Psoas muscle (tissue), 8 donors: ENCODE measurements at regions of chr11 and their contacts with region 1.

Region 1: GRCh38 chr11:14308114-14308896 is 50.7 kb downstream of the RRAS2 start:
- DNase-seq: no peak
- ATAC-seq: peak; percentile 47 to 73 (median 61)
- H3K4me3 ChIP-seq: no peak overlapping the region
- H3K27ac ChIP-seq: no peak overlapping the region
- H3K4me1 ChIP-seq: peaks cover 53% of the 10 kb centered on the region
- H3K27me3 ChIP-seq: no peaks in the 10 kb centered on the region
- CTCF ChIP-seq: peak; percentile 56

Region 2: GRCh38 chr11:14347991-14348390 is 39.7 kb after region 1 on chr11:
- intact Hi-C with region 1: loop called in 1 of 2 experiments (anchors 5 kb)
- DNase-seq: no peak
- ATAC-seq: no peak
- H3K4me3 ChIP-seq: no peak overlapping the region
- H3K27ac ChIP-seq: no peak overlapping the region
- H3K4me1 ChIP-seq: peaks cover 23% of the 10 kb centered on the region
- H3K27me3 ChIP-seq: no peaks in the 10 kb centered on the region
- CTCF ChIP-seq: no peak

Region 3: GRCh38 chr11:14358729-14359439 is 50.6 kb after region 1 on chr11 and contains the start of gene RRAS2:
- intact Hi-C with region 1: loop called in 1 of 2 experiments (anchors 5 kb)
- DNase-seq: peak; percentile 78 to 89
- ATAC-seq: peak; percentile 82 to 88 (median 84)
- H3K4me3 ChIP-seq: peak within 1 kb of the TSS; percentile 95
- H3K27ac ChIP-seq: peak within 1 kb of the TSS; percentile 95
- H3K4me1 ChIP-seq: peaks cover 30% of the 10 kb centered on the region
- H3K27me3 ChIP-seq: no peaks in the 10 kb centered on the region
- CTCF ChIP-seq: no peak
- total RNA-seq, gene RRAS2: 44.3 to 89.8 (median 63.9) TPM

Region 4: DNA sequence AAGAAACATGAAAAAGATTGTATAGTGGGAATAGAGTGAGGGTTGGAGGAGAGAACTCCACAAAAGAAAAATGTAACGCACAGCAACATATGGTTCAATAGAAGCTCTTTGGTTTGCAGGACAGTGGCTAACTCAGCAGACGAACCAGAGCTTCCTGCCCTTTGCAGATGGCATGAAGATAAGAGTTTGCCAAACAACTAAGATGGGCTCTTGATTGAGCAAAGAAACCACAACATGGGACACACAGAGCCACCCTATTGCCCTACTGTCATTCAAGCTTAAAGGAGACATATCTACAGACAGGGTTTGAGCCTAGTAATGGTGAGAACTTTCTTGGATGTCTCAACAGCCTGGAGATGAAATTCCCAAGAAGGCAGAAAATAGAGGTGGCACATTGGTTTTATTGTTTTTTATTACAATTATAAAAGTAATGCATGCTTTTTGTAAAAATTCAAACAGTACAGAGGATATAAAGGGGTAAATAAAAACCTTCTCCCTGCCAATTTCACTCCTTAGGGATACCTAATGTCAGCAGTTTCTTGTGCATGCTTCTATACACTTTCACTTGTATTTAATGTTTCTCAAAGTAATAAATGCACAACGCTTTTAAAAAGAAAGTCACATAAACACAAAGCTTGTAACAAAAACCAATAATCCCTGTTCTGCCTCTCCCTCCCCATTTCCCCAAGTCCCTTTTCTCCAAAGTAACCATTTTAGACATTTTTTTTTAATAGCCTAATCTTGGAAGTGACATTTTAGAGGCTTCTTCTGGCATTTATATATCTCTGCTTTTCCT is 127.6 kb after region 1 on chr11:
- intact Hi-C with region 1: loop called in 1 of 2 experiments (anchors 5 kb)
- DNase-seq: no peak
- ATAC-seq: no peak
- H3K4me3 ChIP-seq: no peak overlapping the region
- H3K27ac ChIP-seq: no peak overlapping the region
- H3K4me1 ChIP-seq: no peaks in the 10 kb centered on the region
- H3K27me3 ChIP-seq: no peaks in the 10 kb centered on the region
- CTCF ChIP-seq: no peak